OCI-LY7 (cell line): ENCODE measurements at regions of chr7 and their contacts with region 1.

Region 1: GRCh38 chr7:38932509-38933168 is 23.6 kb upstream of the VPS41 start:
- DNase-seq: peak; percentile 43
- H3K4me3 ChIP-seq: no peak overlapping the region
- H3K27ac ChIP-seq: no peak overlapping the region
- H3K4me1 ChIP-seq: no peaks in the 10 kb centered on the region
- CTCF ChIP-seq: peak; percentile 97

Region 2: GRCh38 chr7:38893061-38893460 is 39.6 kb before region 1 on chr7:
- CTCF ChIA-PET with region 1: no interaction called
- POLR2A ChIA-PET with region 1: no interaction called
- intact Hi-C with region 1: no loop called
- DNase-seq: no peak
- H3K4me3 ChIP-seq: no peak overlapping the region
- H3K27ac ChIP-seq: no peak overlapping the region
- H3K4me1 ChIP-seq: no peaks in the 10 kb centered on the region
- CTCF ChIP-seq: no peak

Region 3: DNA sequence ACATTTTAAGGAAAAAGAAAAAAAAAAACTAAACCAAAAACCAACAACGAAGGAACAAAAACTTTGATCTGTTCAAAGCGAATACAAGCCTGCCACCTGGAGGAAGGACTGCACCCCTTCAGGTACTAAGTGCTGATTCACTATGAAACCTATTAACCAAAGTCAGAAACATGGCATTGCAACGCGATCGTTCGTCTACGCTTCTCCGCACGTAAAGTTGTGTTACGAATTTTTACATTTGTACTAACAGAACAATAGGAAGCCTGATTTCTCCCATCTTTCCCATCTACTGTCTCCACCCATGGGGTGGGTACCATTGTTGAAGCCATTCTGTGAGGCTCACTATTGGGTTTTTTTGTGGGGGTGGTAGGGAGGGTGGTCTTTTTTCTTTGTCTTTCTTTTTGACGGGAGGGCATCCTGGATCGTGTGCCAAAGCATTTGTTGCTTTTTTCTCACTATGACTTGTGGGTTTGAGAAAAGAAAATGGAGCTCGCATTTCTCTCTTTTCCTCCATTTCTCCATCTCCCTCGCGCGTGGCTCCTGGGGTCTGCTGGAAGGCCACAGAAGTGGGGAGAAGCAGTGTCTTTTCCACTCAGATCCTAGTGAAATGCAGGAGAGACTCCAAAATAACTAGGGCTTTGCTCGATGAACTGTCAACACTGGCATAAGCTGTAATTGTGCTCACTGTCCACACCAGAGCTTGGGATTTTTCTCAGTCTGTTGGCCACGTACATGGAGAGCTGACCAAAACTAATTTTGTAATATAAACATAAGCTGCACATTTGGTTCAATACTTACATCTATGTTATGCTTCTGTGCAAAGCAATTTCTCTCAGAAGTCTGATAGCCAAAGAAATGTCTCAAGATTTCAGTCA is 532.7 kb after region 1 on chr7:
- CTCF ChIA-PET with region 1: no interaction called
- POLR2A ChIA-PET with region 1: no interaction called
- intact Hi-C with region 1: loop called (anchors 5 kb)
- DNase-seq: peak; percentile 36
- H3K4me3 ChIP-seq: no peak overlapping the region
- H3K27ac ChIP-seq: no peak overlapping the region
- H3K4me1 ChIP-seq: no peaks in the 10 kb centered on the region
- CTCF ChIP-seq: peak; percentile 75

Region 4: DNA sequence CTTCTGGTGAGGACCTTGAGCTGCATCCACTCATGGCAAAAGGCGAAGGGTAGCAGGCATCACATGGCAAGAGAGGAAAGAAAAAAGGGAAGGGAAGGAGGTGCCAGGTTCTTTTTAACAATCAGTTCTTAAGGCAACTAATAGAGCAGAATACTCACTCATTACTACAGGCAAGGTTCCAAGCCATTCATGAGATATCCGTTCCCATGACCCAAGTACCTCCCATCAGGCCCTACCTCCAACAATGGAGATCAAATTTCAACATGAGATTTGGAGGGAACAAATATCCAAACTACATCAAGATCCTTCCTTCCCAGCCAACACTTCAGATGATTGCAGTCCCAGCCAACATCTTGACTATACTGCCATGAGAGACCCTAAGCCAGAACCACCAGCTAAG is 594.7 kb after region 1 on chr7:
- CTCF ChIA-PET with region 1: no interaction called
- POLR2A ChIA-PET with region 1: no interaction called
- intact Hi-C with region 1: loop called (anchors 5 kb)
- DNase-seq: no peak
- H3K4me3 ChIP-seq: no peak overlapping the region
- H3K27ac ChIP-seq: no peak overlapping the region
- H3K4me1 ChIP-seq: no peaks in the 10 kb centered on the region
- CTCF ChIP-seq: no peak